Activated CD8-positive, alpha-beta memory T cell treated with anti-CD3 and anti-CD28 coated beads, Interleukin-2, amount 10 ng/mL, durations not matched to agents 7 days and 5 days (primary cell): ENCODE measurements at regions of chr3 and their contacts with region 1.

Region 1: GRCh38 chr3:39388741-39389248 is 5.6 kb downstream of the SLC25A38 start:
- DNase-seq: no peak
- ATAC-seq: peak; percentile 46
- H3K4me3 Mint-ChIP-seq: peak overlapping the region; percentile 57
- H3K27ac Mint-ChIP-seq: peak overlapping the region; percentile 83
- H3K4me1 Mint-ChIP-seq: peaks cover 61% of the 10 kb centered on the region
- H3K27me3 Mint-ChIP-seq: no peaks in the 10 kb centered on the region

Region 2: GRCh38 chr3:39406368-39407258 is 17.8 kb after region 1 on chr3 and contains the start of gene RPSA:
- CTCF ChIA-PET with region 1: interaction called, 13 read pairs
- DNase-seq: peak; percentile 98
- ATAC-seq: peak; percentile 91
- H3K4me3 Mint-ChIP-seq: peak within 1 kb of the TSS; percentile 90
- H3K27ac Mint-ChIP-seq: peak within 1 kb of the TSS; percentile 91
- H3K4me1 Mint-ChIP-seq: peaks cover 48% of the 10 kb centered on the region
- H3K27me3 Mint-ChIP-seq: no peaks in the 10 kb centered on the region
- total RNA-seq, gene RPSA: 1,232 to 1,591 TPM

Region 3: DNA sequence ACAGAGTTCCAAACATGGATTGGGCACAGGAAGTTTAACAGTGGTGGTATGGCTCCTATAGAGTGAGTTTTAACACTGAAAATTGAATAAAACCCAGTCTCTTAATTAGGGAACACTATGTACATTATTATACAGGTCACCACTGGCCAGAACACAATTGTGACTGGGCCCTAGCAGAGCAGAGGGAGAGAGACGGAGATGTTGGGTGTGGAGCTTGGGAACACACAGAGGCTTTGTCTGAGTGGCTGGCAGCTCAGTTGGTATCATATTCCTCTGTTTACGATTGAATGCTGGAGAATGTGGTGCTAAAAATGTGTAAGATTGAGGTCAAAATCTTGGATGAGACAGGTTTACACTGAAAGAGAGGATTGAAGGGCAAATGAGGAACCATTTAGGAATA is 71.9 kb after region 1 on chr3:
- CTCF ChIA-PET with region 1: no interaction called
- DNase-seq: no peak
- ATAC-seq: no peak
- H3K4me3 Mint-ChIP-seq: no peak overlapping the region
- H3K27ac Mint-ChIP-seq: no peak overlapping the region
- H3K4me1 Mint-ChIP-seq: no peaks in the 10 kb centered on the region
- H3K27me3 Mint-ChIP-seq: peaks cover 36% of the 10 kb centered on the region

Region 4: DNA sequence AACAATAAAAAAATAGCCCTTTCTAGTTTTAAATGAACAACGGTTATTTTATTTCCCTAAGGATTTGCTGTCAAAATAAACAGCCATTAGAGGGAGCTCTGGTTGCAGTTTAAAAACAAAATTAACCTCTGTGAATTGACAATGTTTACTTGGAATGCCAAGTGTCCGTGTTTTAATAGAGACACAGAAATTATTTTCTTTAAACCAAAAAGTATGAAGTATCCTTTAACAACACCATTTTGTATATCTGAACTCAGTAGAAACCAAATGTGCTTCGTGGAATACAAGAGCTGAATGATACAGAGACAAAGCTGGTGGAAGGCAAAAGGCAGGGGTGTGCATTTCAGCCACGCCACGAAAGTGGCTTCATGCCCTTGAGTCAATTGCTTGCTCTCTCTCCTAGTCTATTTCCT is 153.1 kb after region 1 on chr3:
- CTCF ChIA-PET with region 1: no interaction called
- DNase-seq: no peak
- ATAC-seq: no peak
- H3K4me3 Mint-ChIP-seq: no peak overlapping the region
- H3K27ac Mint-ChIP-seq: no peak overlapping the region
- H3K4me1 Mint-ChIP-seq: peaks cover 35% of the 10 kb centered on the region
- H3K27me3 Mint-ChIP-seq: peaks cover 11% of the 10 kb centered on the region